ENCODE measurements at regions of chr1 and their contacts with region 1.

Region 1: GRCh38 chr1:66242646-66243547 is 291.1 kb upstream of the SGIP1 start:
- DNase-seq: peak; percentile 35
- H3K4me3 ChIP-seq: no peak overlapping the region
- H3K27ac ChIP-seq: no peak overlapping the region
- H3K4me1 ChIP-seq: peaks cover 13% of the 10 kb centered on the region
- H3K27me3 ChIP-seq: no peaks in the 10 kb centered on the region
- CTCF ChIP-seq: peak; percentile 98 to 100 (median 99)

Region 2: GRCh38 chr1:65979136-65980044 is 263.5 kb before region 1 on chr1:
- dilution Hi-C with region 1: loop called (anchors 25 kb)
- DNase-seq: no peak
- H3K4me3 ChIP-seq: no peak overlapping the region
- H3K27ac ChIP-seq: no peak overlapping the region
- H3K4me1 ChIP-seq: no peaks in the 10 kb centered on the region
- H3K27me3 ChIP-seq: no peaks in the 10 kb centered on the region
- CTCF ChIP-seq: no peak

Region 3: GRCh38 chr1:66084442-66084841 is 158.5 kb before region 1 on chr1:
- dilution Hi-C with region 1: no loop called
- DNase-seq: no peak
- H3K4me3 ChIP-seq: no peak overlapping the region
- H3K27ac ChIP-seq: no peak overlapping the region
- H3K4me1 ChIP-seq: no peaks in the 10 kb centered on the region
- H3K27me3 ChIP-seq: no peaks in the 10 kb centered on the region
- CTCF ChIP-seq: no peak

Measured in keratinocyte (primary cell).